ENCODE measurements at regions of chr4 and their contacts with region 1.

Region 1: GRCh38 chr4:11514779-11515419 is 86.2 kb upstream of the HS3ST1 start:
- DNase-seq: no peak
- H3K4me3 Mint-ChIP-seq: no peak overlapping the region
- H3K27ac Mint-ChIP-seq: no peak overlapping the region
- H3K4me1 Mint-ChIP-seq: peaks cover 30% of the 10 kb centered on the region
- H3K27me3 Mint-ChIP-seq: peaks cover 5% of the 10 kb centered on the region

Region 2: GRCh38 chr4:11428899-11429698 is 85.8 kb before region 1 on chr4:
- intact Hi-C with region 1: loop called (anchors 5 kb)
- DNase-seq: peak; percentile 18
- H3K4me3 Mint-ChIP-seq: peak overlapping the region; percentile 82
- H3K27ac Mint-ChIP-seq: no peak overlapping the region
- H3K4me1 Mint-ChIP-seq: peaks cover 10% of the 10 kb centered on the region
- H3K27me3 Mint-ChIP-seq: peaks cover 65% of the 10 kb centered on the region